Breast epithelium (tissue), 4 donors: ENCODE measurements at regions of chr11 and their contacts with region 1.

Region 1: DNA sequence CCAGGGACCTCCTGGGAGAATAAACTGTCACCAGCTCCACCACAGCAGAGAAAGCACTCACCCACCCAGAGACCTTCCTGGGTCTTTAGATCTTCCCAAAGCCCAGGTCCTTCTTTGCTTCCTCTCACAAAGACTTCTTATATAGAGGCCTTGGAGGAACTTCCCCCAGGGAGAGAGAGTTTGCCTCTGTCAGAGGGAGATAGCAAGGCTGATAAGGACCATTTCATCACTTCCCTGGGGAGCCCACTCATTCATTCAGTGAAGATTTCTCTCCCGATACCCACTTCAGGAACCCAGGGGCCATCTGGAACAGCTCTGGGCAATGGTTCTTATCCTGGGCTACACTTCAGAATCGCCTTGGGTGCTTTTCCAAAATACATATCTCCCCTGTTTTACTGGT is at the start of gene PRG2:
- DNase-seq: no peak
- H3K4me3 ChIP-seq: no peak within 1 kb of the TSS
- H3K27ac ChIP-seq: no peak within 1 kb of the TSS
- H3K4me1 ChIP-seq: no peaks in the 10 kb centered on the region
- H3K27me3 ChIP-seq: no peaks in the 10 kb centered on the region
- CTCF ChIP-seq: no peak
- POLR2A ChIP-seq: no peak
- total RNA-seq, gene PRG2: 1.1 TPM in 1 of 3 donors, not detected in the others

Region 2: GRCh38 chr11:56932572-56933220 is 457.8 kb before region 1 on chr11:
- intact Hi-C with region 1: loop called (anchors 5 kb)
- DNase-seq: no peak
- H3K4me3 ChIP-seq: no peak overlapping the region
- H3K27ac ChIP-seq: no peak overlapping the region
- H3K4me1 ChIP-seq: no peaks in the 10 kb centered on the region
- H3K27me3 ChIP-seq: no peaks in the 10 kb centered on the region
- CTCF ChIP-seq: no peak
- POLR2A ChIP-seq: no peak